ENCODE measurements at regions of chr4 and their contacts with region 1.

Region 1: DNA sequence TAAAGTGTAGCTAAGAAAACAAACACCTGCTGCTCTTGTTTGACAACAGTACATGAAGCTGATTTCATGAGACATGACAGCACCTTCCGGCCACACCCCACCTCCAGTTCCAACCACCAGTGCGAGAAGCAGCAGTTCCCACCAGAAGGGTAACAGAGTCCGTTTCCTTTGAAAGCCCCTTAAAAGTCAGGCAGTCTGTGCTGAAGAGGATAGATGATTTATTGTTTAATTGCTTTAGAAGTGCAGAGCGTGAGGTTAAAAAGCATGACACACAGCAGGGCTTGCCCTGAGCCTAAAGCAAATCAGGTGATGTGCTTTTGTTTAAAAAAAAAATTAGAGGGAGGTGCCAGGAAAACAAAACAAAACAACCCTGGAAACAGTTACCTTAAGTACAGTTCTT is 82.6 kb downstream of the HADH start:
- DNase-seq: peak; percentile 84
- H3K4me3 Mint-ChIP-seq: peak overlapping the region; percentile 38
- H3K27ac Mint-ChIP-seq: peak overlapping the region; percentile 89
- H3K4me1 Mint-ChIP-seq: peaks cover 84% of the 10 kb centered on the region
- H3K27me3 Mint-ChIP-seq: no peaks in the 10 kb centered on the region

Region 2: DNA sequence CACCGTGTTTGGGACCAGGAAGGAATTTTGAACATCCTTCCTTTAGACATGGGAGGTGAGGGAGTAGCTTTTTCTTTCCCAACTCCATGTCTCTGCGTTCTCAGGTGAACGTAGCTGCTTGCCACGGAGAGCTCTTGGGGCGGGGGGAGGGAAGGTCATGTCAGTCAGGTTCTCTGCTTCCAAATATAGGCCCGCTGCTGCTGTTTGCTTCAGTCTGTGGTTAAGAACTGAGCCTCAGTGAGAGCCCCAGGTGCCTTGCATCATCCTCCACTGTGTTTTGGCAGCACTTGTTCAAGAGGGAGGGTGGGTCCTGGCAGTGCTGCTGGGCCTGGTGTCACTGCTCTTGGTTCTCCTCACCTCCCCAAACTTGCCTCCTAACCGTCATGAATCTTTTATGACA is 36.1 kb before region 1 on chr4:
- CTCF ChIA-PET with region 1: interaction called, 7 read pairs
- intact Hi-C with region 1: loop called (anchors 1 kb)
- DNase-seq: peak; percentile 91
- H3K4me3 Mint-ChIP-seq: peak overlapping the region; percentile 72
- H3K27ac Mint-ChIP-seq: peak overlapping the region; percentile 98
- H3K4me1 Mint-ChIP-seq: peaks cover 69% of the 10 kb centered on the region
- H3K27me3 Mint-ChIP-seq: no peaks in the 10 kb centered on the region

Region 3: DNA sequence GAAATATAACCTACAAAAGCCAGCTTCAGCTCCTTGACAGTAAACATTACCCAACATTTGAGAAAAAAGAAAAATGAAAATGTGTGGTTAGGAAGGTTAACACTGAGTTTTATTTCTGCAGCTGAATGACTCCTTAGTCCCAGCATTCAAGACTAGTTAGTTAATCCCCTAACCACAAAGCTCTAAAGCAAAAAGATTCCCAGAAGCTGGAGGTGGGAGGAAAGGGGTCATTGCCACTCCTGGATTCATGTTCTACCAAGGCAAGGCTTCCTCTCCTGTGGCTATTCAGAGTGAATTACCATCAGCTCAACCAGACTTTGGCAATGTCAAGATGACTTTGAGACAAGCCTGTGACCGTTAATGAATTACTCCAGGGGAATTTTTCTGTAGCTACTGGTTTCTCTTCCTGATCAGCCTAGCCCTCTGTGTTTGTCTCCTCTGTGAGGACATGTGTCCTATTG is 19.0 kb before region 1 on chr4:
- CTCF ChIA-PET with region 1: interaction called, 5 read pairs
- intact Hi-C with region 1: loop called (anchors 1 kb)
- DNase-seq: no peak
- H3K4me3 Mint-ChIP-seq: peak overlapping the region; percentile 34
- H3K27ac Mint-ChIP-seq: peak overlapping the region; percentile 93
- H3K4me1 Mint-ChIP-seq: peaks cover 94% of the 10 kb centered on the region
- H3K27me3 Mint-ChIP-seq: no peaks in the 10 kb centered on the region

Region 4: GRCh38 chr4:108100827-108101226 is 28.5 kb after region 1 on chr4:
- CTCF ChIA-PET with region 1: no interaction called
- intact Hi-C with region 1: loop called (anchors 1 kb)
- DNase-seq: no peak
- H3K4me3 Mint-ChIP-seq: peak overlapping the region; percentile 7
- H3K27ac Mint-ChIP-seq: peak overlapping the region; percentile 89
- H3K4me1 Mint-ChIP-seq: peaks cover 92% of the 10 kb centered on the region
- H3K27me3 Mint-ChIP-seq: no peaks in the 10 kb centered on the region

Region 5: GRCh38 chr4:108118490-108118889 is 46.2 kb after region 1 on chr4:
- CTCF ChIA-PET with region 1: interaction called, 3 read pairs
- intact Hi-C with region 1: loop called (anchors 1 kb)
- DNase-seq: peak; percentile 58
- H3K4me3 Mint-ChIP-seq: peak overlapping the region; percentile 50
- H3K27ac Mint-ChIP-seq: peak overlapping the region; percentile 96
- H3K4me1 Mint-ChIP-seq: peaks cover 93% of the 10 kb centered on the region
- H3K27me3 Mint-ChIP-seq: no peaks in the 10 kb centered on the region